ENCODE measurements at regions of chr1 and their contacts with region 1.

Region 1: GRCh38 chr1:88327391-88328267 is 356.4 kb upstream of the PKN2 start:
- DNase-seq: no peak
- ATAC-seq: no peak
- H3K4me3 ChIP-seq: no peak overlapping the region
- H3K27ac ChIP-seq: no peak overlapping the region
- H3K4me1 ChIP-seq: no peaks in the 10 kb centered on the region
- H3K27me3 ChIP-seq: no peaks in the 10 kb centered on the region
- CTCF ChIP-seq: no peak
- EP300 ChIP-seq: no peak
- POLR2A ChIP-seq: no peak
- RAD21 ChIP-seq: no peak

Region 2: GRCh38 chr1:88867743-88868521 is 540.3 kb after region 1 on chr1:
- CTCF ChIA-PET with region 1: no interaction called
- POLR2A ChIA-PET with region 1: no interaction called
- in situ Hi-C with region 1: loop called (anchors 25 kb)
- intact Hi-C with region 1: no loop called
- DNase-seq: no peak
- ATAC-seq: no peak
- H3K4me3 ChIP-seq: no peak overlapping the region
- H3K27ac ChIP-seq: no peak overlapping the region
- H3K4me1 ChIP-seq: no peaks in the 10 kb centered on the region
- H3K27me3 ChIP-seq: no peaks in the 10 kb centered on the region
- CTCF ChIP-seq: no peak
- EP300 ChIP-seq: no peak
- POLR2A ChIP-seq: no peak
- RAD21 ChIP-seq: no peak